ENCODE measurements at regions of chr12 and their contacts with region 1.

Region 1: GRCh38 chr12:5200278-5201087 is 156.8 kb downstream of the KCNA5 start:
- DNase-seq: peak in 2 of 3 donors; percentile 69 to 73
- ATAC-seq: peak; percentile 65
- H3K4me3 ChIP-seq: no peak overlapping the region
- H3K4me1 ChIP-seq: no peaks in the 10 kb centered on the region
- CTCF ChIP-seq: peak; percentile 51

Region 2: GRCh38 chr12:5243014-5243413 is 42.5 kb after region 1 on chr12:
- intact Hi-C with region 1: no loop called
- DNase-seq: no peak
- ATAC-seq: no peak
- H3K4me3 ChIP-seq: no peak overlapping the region
- H3K4me1 ChIP-seq: peaks cover 11% of the 10 kb centered on the region
- CTCF ChIP-seq: no peak

Region 3: GRCh38 chr12:5428332-5429221 is 228.1 kb after region 1 on chr12:
- intact Hi-C with region 1: loop called in 1 of 2 experiments (anchors 10 kb)
- DNase-seq: no peak
- ATAC-seq: peak; percentile 39
- H3K4me3 ChIP-seq: no peak overlapping the region
- H3K4me1 ChIP-seq: peaks cover 16% of the 10 kb centered on the region
- CTCF ChIP-seq: no peak